Activated CD8-positive, alpha-beta memory T cell treated with anti-CD3 and anti-CD28 coated beads, Interleukin-2, amount 10 ng/mL, durations not matched to agents 7 days and 5 days (primary cell): ENCODE measurements at regions of chr2 and their contacts with region 1.

Region 1: DNA sequence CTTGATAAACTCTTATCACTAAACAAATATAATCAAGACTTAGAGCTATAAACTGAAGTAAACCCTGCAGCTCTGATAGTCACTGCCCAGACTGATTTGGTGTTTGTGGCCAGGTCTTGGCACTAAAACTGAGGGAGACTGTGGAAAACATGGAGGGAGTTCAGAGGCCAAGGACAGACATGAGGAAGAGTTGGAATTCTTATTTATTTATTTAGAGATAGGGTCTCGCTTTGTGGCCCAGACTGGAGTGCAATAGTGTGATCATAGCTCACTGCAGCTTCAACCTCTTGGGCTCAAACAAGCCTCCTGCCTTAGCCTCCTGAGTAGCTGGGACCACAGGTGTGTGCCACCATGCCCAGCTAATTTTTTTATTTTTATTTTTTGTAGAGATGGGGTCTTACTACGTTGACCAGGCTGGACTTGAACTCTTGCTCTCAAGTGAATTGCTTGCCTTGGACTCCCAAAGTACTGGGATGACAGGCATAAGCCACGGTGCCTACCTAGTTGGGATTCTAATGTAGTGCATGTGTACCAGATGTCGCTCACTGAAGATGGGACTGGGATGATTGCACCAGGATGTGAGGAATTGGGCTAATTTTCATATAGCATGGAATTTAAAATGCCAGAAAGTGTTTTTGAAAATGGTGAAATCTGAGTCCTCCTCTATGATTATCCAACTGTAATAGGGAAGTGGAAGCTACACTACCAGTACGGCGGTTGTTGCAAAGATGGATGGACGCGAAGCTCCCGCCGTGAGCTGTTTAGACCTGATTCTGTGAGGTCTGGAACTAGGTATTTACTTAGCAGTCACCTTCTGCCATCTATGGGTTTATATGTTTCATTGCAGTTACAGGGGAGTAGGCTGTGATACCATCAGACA is 52.7 kb upstream of the CTLA4 start:
- DNase-seq: peak; percentile 65
- ATAC-seq: peak; percentile 76
- H3K4me3 Mint-ChIP-seq: peak overlapping the region; percentile 39
- H3K27ac Mint-ChIP-seq: no peak overlapping the region
- H3K4me1 Mint-ChIP-seq: peaks cover 49% of the 10 kb centered on the region
- H3K27me3 Mint-ChIP-seq: peaks cover 13% of the 10 kb centered on the region

Region 2: GRCh38 chr2:203412546-203413331 is 402.2 kb before region 1 on chr2:
- CTCF ChIA-PET with region 1: no interaction called
- DNase-seq: no peak
- ATAC-seq: no peak
- H3K4me3 Mint-ChIP-seq: no peak overlapping the region
- H3K27ac Mint-ChIP-seq: no peak overlapping the region
- H3K4me1 Mint-ChIP-seq: peaks cover 2% of the 10 kb centered on the region
- H3K27me3 Mint-ChIP-seq: no peaks in the 10 kb centered on the region

Region 3: GRCh38 chr2:203484266-203485112 is 330.4 kb before region 1 on chr2:
- CTCF ChIA-PET with region 1: interaction called, 28 read pairs
- DNase-seq: peak; percentile 69
- ATAC-seq: peak; percentile 82
- H3K4me3 Mint-ChIP-seq: no peak overlapping the region
- H3K27ac Mint-ChIP-seq: no peak overlapping the region
- H3K4me1 Mint-ChIP-seq: peaks cover 9% of the 10 kb centered on the region
- H3K27me3 Mint-ChIP-seq: peaks cover 2% of the 10 kb centered on the region

Region 4: DNA sequence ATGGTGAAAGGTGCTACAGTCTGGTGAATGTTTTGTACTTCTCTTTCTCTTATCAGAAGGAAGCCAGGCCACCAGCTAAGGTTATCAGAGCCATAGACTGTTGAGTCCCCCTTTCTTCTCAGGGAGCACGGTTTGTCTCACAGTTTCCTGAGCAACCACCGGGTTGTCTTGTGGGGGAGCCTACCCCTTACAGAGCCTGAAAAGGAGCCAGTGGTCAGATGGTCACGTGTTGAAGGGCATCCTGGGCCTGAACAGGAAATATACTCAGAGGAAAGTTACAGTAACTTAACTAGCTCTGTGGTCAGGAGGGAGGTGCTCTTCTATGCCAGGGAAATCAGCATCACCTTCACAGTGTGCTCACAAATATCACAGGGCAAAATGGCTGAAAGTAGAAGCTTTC is 96.8 kb before region 1 on chr2:
- CTCF ChIA-PET with region 1: interaction called, 11 read pairs
- DNase-seq: peak; percentile 91
- ATAC-seq: peak; percentile 86
- H3K4me3 Mint-ChIP-seq: peak overlapping the region; percentile 34
- H3K27ac Mint-ChIP-seq: peak overlapping the region; percentile 88
- H3K4me1 Mint-ChIP-seq: peaks cover 89% of the 10 kb centered on the region
- H3K27me3 Mint-ChIP-seq: no peaks in the 10 kb centered on the region

Region 5: DNA sequence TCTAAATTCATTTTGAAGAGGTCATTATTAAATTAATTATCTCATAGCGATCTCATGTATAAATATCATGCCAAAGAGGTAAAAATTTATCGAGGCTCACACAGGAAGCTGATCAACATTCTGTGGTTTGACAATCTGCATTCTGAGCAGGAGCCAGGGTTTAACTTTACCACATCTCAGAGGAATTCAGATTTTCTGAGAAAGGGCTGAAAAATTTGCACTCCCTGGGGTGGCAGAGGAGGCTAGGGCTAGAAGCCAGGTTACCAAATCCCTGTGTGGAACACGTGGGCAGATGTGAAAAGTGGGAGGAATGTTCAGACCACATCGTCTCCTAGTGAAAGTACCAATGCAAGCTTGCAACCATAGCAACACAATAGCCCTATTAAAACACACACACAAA is 10.8 kb before region 1 on chr2:
- CTCF ChIA-PET with region 1: interaction called, 13 read pairs
- DNase-seq: peak; percentile 58
- ATAC-seq: peak; percentile 54
- H3K4me3 Mint-ChIP-seq: no peak overlapping the region
- H3K27ac Mint-ChIP-seq: no peak overlapping the region
- H3K4me1 Mint-ChIP-seq: peaks cover 68% of the 10 kb centered on the region
- H3K27me3 Mint-ChIP-seq: peaks cover 3% of the 10 kb centered on the region

Region 6: GRCh38 chr2:203909261-203909967 is 94.5 kb after region 1 on chr2:
- CTCF ChIA-PET with region 1: interaction called, 35 read pairs
- DNase-seq: no peak
- ATAC-seq: peak; percentile 74
- H3K4me3 Mint-ChIP-seq: peak overlapping the region; percentile 0
- H3K27ac Mint-ChIP-seq: peak overlapping the region; percentile 12
- H3K4me1 Mint-ChIP-seq: peaks cover 25% of the 10 kb centered on the region
- H3K27me3 Mint-ChIP-seq: no peaks in the 10 kb centered on the region

Region 7: GRCh38 chr2:203940039-203940438 is 125.1 kb after region 1 on chr2:
- CTCF ChIA-PET with region 1: no interaction called
- DNase-seq: no peak
- ATAC-seq: peak; percentile 8
- H3K4me3 Mint-ChIP-seq: peak overlapping the region; percentile 88
- H3K27ac Mint-ChIP-seq: peak overlapping the region; percentile 85
- H3K4me1 Mint-ChIP-seq: peaks cover 72% of the 10 kb centered on the region
- H3K27me3 Mint-ChIP-seq: no peaks in the 10 kb centered on the region